Head of caudate nucleus (tissue), 42 donors: ENCODE measurements at regions of chr9 and their contacts with region 1.

Region 1: DNA sequence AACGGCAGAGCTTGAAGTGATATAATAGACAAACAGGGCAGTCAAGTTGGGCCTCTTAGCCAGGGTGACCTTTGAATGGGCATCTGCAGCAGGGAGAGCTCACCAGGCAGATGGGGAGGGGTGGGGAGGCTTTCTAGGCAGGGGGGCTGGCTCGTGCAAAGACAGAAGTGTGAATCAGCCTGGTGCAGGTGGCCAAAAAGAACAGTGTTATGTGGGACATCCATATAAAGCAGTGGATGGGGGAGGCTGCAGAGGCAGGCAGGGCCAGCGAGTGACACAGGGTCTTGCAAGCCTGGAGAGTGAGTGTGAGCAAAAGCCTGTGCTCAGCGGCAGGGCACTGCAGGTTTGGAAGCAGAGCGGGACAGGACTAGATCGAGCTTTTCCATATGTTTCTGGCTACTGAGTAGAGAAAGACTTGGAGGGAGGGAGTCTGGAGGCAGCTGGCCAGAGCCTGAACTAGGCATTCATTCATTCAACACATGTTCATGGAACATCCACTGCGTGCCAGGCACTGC is 14.2 kb upstream of the TTLL11 start:
- DNase-seq: peak in 6 of 42 donors; percentile 11 to 48 (median 39)

Region 2: GRCh38 chr9:122453677-122454135 is 346.4 kb after region 1 on chr9:
- intact Hi-C with region 1: loop called (anchors 10 kb)
- DNase-seq: no peak